Transverse colon (tissue), 4 donors: ENCODE measurements at regions of chr2 and their contacts with region 1.

Region 1: DNA sequence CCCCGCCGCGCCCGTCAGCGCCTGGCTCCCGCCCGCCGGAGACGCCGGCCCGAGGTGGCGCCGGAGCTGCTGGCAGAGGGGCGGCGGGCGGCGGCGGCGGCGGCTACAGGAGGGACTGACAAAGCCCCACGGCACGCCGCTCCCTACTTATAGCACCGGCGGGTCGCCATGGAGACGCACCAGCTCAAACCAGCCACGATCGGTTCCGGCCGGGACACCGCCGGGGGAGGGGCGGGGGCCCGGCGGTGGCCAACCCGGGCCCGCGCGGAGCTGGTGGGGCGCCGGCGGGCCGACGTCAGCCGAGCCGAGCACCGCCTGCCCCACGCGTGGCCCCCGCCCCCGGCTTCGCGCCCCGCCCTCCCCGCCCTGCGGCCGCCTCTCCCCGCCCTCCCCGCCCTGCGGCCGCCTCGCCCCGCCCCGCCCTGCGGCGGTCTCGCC is at the start of gene ODC1:
- DNase-seq: peak; percentile 96
- H3K4me3 ChIP-seq: peak within 1 kb of the TSS; percentile 69 to 83 (median 74)
- H3K27ac ChIP-seq: peak within 1 kb of the TSS; percentile 96 to 98 (median 98)
- H3K4me1 ChIP-seq: peaks cover 14 to 60% (median 38%) of the 10 kb centered on the region in 4 donors
- H3K27me3 ChIP-seq: no peaks in the 10 kb centered on the region
- CTCF ChIP-seq: no peak
- EP300 ChIP-seq: no peak
- POLR2A ChIP-seq: no peak
- total RNA-seq, gene ODC1: 36.2 to 75.2 (median 43.2) TPM

Region 2: DNA sequence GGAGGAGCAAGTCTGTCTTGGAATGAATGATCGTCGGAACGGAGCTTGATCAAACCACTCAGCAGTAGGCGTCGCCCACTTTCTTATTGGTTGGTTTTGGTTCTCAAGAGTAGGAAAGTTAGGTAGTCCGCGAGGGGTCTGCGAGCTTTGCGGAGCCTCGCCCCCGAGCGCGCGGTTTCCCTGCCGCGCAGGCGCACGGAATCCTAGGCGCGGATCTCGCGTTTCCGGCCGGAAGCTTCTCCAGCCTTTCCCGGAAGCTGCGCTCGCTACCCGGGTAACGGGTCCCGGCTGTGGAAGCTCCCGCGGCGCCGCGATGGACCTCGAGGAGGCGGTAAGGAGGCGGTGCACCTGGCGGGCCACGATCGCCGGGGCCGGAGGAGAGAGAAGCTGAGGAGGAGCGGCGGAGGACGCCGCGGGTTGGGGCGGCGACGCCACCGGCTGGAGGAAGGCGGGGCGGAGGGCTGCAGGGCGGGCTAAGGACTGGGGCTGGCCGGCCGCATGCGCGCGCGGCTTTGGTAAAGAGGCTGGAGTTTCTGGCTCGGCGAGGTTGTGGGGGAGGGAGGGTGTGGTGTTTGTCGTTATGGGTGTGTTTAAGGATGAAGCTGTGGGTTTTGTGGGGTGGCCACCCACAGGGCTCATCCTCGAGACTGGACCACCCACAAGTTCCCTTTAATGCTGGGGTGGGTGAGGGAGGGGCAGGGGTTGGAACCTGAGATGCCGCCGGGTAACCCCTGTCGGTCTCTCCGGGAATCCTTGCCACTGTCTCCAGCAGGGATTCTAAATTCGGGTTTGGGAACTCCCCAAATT is 604.8 kb before region 1 on chr2 and contains the start of gene TAF1B:
- in situ Hi-C with region 1: loop called in 1 of 4 experiments (anchors 25 kb)
- intact Hi-C with region 1: no loop called
- DNase-seq: peak; percentile 89
- H3K4me3 ChIP-seq: peak within 1 kb of the TSS; percentile 74 to 92 (median 86)
- H3K27ac ChIP-seq: peak within 1 kb of the TSS; percentile 92 to 94 (median 94)
- H3K4me1 ChIP-seq: peaks cover 0 to 21% (median 13%) of the 10 kb centered on the region in 4 donors
- H3K27me3 ChIP-seq: no peaks in the 10 kb centered on the region
- CTCF ChIP-seq: peak in 4 of 5 experiments; percentile 24 to 28 (median 26)
- EP300 ChIP-seq: no peak
- POLR2A ChIP-seq: peak; percentile 83
- total RNA-seq, gene TAF1B: 0.80 to 18.9 (median 4.4) TPM in 3 of 4 donors, not detected in the other

Region 3: DNA sequence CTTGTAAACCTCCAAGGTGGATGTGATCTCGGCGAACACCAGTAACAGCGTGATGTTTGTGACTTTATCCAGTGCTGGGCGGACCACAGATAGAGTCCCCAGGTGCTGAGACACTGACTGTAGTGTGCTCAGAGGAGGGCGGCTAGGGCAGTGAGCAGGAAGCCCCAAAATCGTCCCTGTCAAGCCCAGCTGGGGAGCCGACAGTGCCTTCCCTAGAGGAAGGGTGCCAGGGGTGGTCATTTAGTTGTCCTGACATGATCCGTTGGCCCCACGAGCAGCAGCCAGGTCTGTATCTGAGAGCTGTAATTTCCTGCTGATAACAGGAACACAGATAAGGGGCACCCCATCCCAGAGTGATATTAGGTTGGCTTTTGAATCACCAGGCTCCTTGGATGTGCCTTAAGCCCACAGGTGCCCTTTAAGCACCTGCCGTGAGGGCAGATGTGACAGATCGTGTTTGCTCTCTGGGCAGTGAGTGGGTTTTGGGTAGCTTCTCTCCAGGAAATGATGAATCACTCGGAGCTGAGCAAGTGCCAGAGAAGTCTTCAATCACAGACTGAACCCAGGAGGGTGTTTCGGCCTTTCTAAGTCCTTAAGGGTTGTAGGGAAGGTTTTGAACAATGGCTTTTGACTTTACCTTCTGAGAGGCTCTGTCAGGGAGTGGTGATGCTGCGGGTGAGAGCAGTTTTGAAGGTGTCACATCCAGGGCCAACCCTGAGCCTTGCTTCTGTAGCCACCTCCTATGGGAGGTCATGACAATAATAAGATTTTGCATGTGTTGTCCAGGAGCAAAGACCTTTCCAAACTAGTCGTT is 1305.9 kb after region 1 on chr2:
- in situ Hi-C with region 1: no loop called
- intact Hi-C with region 1: no loop called
- DNase-seq: peak; percentile 65
- H3K4me3 ChIP-seq: peak overlapping the region in 3 of 4 donors; percentile 7 to 36 (median 24)
- H3K27ac ChIP-seq: peak overlapping the region; percentile 84 to 92 (median 86)
- H3K4me1 ChIP-seq: peaks cover 15 to 51% (median 26%) of the 10 kb centered on the region in 4 donors
- H3K27me3 ChIP-seq: no peaks in the 10 kb centered on the region
- CTCF ChIP-seq: no peak
- EP300 ChIP-seq: no peak
- POLR2A ChIP-seq: peak; percentile 19